Pancreas (tissue), 10 donors: ENCODE measurements at regions of chr12 and their contacts with region 1.

Region 1: DNA sequence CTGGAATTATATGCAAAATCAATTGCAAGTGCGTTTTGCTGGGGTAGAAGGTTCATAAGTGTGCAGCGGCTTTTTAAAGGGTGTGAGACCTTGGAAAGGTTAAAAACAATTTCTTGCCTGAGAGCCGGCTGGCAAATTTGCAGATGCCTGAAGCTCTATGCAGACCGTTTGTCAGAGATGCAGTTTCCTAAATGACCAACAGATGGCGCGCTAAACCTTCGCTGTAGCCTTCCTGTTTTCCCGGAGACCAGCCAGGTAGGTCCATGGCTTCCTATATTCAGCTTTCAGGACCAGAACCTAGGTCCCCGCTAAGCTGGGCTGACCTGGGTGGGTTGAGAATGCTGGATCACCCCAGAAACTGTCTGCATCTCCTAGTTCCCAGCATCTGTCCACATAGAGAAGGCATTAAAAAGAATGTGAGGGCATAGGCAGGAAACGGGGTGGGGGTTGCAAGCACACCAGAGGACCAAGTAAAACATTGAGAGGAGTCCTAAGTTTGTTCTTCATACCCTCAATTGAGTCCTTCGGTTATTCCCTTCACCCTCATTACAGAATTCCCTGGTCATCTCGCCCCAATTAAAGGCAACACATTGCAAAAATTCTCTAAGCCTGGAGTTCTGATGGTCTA is 5.7 kb upstream of the NOS1 start:
- DNase-seq: peak; percentile 57 to 89 (median 74)
- ATAC-seq: peak; percentile 84 to 97 (median 89)
- H3K4me3 ChIP-seq: no peak overlapping the region
- H3K27ac ChIP-seq: no peak overlapping the region
- H3K4me1 ChIP-seq: no peaks in the 10 kb centered on the region
- H3K27me3 ChIP-seq: no peaks in the 10 kb centered on the region
- CTCF ChIP-seq: peak; percentile 72 to 93 (median 86)

Region 2: DNA sequence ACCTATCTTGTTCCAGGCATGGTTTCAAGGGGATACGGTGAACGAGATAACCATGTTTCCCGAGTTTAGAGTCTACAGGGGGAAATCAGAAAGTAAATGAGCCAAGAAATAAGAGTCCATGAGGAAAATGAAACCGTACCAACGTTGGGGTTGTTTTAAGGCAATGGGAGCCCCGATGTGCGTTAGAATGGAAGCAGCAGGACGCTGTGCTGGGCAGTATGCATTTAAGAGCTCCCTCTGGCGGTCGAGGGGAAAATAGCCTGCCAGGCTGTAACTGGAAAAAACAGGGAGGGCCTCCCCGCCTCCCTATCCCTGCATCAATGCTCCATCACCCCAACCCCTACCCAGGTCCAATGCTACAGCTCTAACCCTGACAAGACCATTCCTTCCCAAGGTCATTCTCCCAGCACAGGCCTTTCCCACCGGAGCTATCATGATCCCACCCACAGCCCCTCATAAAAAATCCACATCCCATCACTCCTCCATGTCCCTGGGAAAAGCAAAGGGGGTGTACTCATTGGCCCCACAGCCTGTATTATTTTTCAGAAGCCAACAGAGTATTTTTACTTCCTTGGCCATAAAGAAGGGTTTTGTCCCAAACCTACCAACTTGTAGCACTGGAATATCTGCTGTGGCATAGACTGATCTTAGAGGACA is 220.6 kb after region 1 on chr12:
- intact Hi-C with region 1: loop called (anchors 5 to 10 kb)
- DNase-seq: peak; percentile 17 to 82 (median 62)
- ATAC-seq: peak; percentile 66 to 92 (median 85)
- H3K4me3 ChIP-seq: no peak overlapping the region
- H3K27ac ChIP-seq: no peak overlapping the region
- H3K4me1 ChIP-seq: no peaks in the 10 kb centered on the region
- H3K27me3 ChIP-seq: no peaks in the 10 kb centered on the region
- CTCF ChIP-seq: peak; percentile 58 to 77 (median 76)

Region 3: DNA sequence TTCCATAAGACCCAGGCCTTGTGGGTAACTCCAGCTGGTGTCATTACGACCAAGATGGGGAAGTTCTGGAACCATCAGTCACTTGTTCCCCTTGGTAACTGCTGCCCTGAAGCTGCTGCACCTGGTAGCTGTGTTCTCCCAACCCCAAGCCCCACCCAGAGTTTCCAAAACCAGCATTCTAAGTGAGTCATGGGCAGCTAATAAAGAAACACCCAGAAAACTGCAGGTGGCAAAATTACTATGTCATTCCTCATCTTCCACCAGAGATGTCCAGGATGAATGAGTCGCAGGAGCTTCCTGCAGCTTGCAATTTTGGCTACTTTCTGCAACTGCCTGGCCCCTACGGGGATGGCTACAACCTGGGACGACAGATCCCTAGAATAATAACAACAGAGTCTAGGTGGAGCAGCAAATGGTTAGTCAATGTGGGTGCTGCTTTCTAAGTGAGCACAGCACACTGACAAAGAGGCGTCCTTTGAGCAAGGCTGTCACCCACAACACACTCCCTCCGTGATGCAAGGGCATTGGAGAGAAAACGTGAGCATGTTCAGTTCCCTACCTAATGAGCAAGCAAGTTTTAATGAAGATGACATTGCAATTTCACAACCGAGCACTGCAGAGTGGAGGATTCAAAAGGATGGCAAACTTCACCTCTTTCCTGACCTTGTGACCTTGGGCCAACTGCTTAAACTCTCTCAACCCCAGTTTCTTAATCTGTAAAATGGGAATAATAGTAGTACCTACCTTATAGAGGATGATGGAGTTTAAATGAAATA is 295.7 kb after region 1 on chr12:
- intact Hi-C with region 1: loop called in 1 of 3 experiments (anchors 10 kb)
- DNase-seq: no peak
- ATAC-seq: no peak
- H3K4me3 ChIP-seq: no peak overlapping the region
- H3K27ac ChIP-seq: no peak overlapping the region
- H3K4me1 ChIP-seq: no peaks in the 10 kb centered on the region
- H3K27me3 ChIP-seq: no peaks in the 10 kb centered on the region
- CTCF ChIP-seq: no peak

Region 4: DNA sequence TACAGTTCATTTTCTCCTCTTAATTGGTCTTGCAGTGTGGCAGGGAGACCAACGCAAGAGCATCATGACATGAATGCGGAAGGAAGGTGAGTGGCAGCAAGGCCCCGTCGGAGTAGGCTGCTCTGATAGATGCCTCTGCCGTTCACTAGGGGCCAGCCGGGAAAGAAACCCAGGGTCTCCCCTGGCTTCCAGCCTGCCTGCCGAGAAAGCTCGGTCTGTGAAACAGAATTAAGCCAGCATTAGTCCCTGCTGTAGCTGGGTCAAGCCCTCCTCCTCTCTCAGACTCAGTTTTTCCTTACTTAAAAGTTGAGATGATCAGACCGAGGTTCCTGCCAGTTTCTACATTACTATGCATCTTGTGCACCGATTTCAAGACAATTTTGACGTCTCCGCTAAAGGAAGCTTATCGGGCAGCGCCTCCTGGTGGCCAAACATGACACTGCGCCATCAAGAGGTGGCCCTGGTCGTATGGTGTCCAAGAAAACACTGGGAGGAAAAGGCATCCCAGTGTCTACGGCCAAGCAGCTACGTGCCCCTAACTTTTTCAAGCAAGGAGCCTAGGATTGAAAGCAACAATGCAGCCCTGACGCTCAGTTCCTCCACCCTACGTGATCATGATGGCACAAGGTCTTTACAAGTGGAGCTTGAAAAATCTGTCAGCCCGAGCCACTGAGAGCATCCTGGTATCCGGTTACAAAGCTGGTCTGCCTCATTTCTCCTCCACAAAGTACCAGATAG is 470.0 kb after region 1 on chr12:
- intact Hi-C with region 1: loop called in 2 of 3 experiments (anchors 5 to 10 kb)
- DNase-seq: peak; percentile 50 to 95 (median 78)
- ATAC-seq: peak; percentile 64 to 92 (median 84)
- H3K4me3 ChIP-seq: no peak overlapping the region
- H3K27ac ChIP-seq: no peak overlapping the region
- H3K4me1 ChIP-seq: no peaks in the 10 kb centered on the region
- H3K27me3 ChIP-seq: no peaks in the 10 kb centered on the region
- CTCF ChIP-seq: peak; percentile 91 to 98 (median 94)